Aorta (tissue), 5 donors: ENCODE measurements at regions of chr19 and their contacts with region 1.

Region 1: DNA sequence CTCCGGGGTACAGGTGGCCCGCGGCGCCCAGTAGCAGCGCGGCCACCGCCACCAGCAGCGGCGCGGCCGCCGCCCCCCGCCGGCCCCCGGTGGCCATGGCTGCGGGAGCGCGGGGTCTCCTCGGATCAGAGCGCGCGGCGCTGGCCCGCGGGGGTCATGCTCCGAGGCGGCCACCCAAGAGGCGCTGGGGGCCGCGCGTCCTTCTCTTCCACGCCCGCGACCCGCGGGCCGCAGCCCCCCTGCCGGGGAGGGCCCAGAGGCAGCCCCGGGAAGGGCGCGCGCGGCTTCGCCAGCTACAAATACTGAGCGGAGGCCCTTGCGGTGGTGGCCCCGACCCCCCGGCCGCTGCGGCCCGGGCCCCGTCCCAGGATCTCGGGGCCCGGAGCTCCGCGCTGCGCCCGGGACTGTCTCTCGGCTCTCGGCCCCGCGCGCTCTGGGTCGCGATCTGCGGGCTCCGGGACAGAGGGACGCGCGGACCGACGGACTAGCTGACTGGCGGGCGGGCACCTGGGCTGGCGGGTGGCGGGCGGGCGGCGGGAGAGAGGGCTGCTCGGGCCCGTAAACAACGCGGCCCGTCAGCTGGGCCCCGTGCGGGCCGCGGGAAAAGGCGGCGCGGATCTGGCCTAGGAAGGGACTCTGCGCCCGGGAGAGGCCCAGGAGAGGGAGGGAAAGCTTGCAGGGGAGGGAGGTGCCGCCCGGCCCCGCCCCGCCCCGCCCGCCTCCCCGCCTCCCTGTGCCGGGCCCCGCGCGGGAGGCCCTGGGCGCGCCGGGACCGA is at the start of gene INSR:
- DNase-seq: peak; percentile 94 to 95
- ATAC-seq: peak; percentile 96
- H3K4me3 ChIP-seq: peak within 1 kb of the TSS; percentile 90 to 94
- H3K27ac ChIP-seq: peak within 1 kb of the TSS; percentile 59 to 74
- H3K4me1 ChIP-seq: peaks cover 0 to 2% of the 10 kb centered on the region in 2 donors
- H3K27me3 ChIP-seq: no peaks in the 10 kb centered on the region
- total RNA-seq, gene INSR: 67.0 to 106 TPM

Region 2: GRCh38 chr19:7145494-7146485 is 148.2 kb before region 1 on chr19:
- intact Hi-C with region 1: loop called (anchors 5 kb)
- DNase-seq: peak in 1 of 2 donors; percentile 12
- ATAC-seq: no peak
- H3K4me3 ChIP-seq: no peak overlapping the region
- H3K27ac ChIP-seq: no peak overlapping the region
- H3K4me1 ChIP-seq: no peaks in the 10 kb centered on the region
- H3K27me3 ChIP-seq: no peaks in the 10 kb centered on the region

Region 3: DNA sequence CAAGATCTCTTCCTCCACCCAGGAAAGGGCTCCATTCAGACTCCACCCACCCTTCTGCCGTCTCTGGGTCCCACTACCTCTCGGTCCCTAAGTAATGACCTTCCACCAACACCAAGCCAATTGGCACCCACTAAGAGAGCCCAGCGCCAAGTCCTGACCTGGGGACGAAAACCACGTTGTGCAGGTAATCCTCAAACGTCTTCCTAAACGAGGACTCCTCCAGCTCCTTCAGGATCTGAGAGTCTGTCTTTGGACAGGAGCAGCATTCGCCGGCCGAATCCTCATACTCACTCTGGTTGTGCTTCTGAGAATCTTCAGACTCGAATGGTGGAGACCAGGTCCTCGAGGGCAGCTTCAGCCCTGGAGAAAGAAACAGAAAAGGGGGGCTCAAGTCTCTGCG is 141.4 kb before region 1 on chr19:
- intact Hi-C with region 1: loop called (anchors 5 kb)
- DNase-seq: peak in 1 of 2 donors; percentile 51
- ATAC-seq: no peak
- H3K4me3 ChIP-seq: no peak overlapping the region
- H3K27ac ChIP-seq: no peak overlapping the region
- H3K4me1 ChIP-seq: no peaks in the 10 kb centered on the region
- H3K27me3 ChIP-seq: no peaks in the 10 kb centered on the region

Region 4: GRCh38 chr19:7159105-7159933 is 134.7 kb before region 1 on chr19:
- intact Hi-C with region 1: loop called (anchors 5 kb)
- DNase-seq: peak; percentile 83 to 87
- ATAC-seq: peak; percentile 94
- H3K4me3 ChIP-seq: no peak overlapping the region
- H3K27ac ChIP-seq: peak overlapping the region; percentile 73 to 77
- H3K4me1 ChIP-seq: no peaks in the 10 kb centered on the region
- H3K27me3 ChIP-seq: no peaks in the 10 kb centered on the region

Region 5: GRCh38 chr19:7197760-7198696 is 96.0 kb before region 1 on chr19:
- intact Hi-C with region 1: loop called (anchors 1 kb)
- DNase-seq: peak; percentile 96 to 97
- ATAC-seq: peak; percentile 95
- H3K4me3 ChIP-seq: peak overlapping the region; percentile 61 to 74
- H3K27ac ChIP-seq: peak overlapping the region in 1 of 2 donors; percentile 72
- H3K4me1 ChIP-seq: no peaks in the 10 kb centered on the region
- H3K27me3 ChIP-seq: no peaks in the 10 kb centered on the region

Region 6: GRCh38 chr19:7230826-7231225 is 63.2 kb before region 1 on chr19:
- intact Hi-C with region 1: loop called in 1 of 2 experiments (anchors 10 kb)
- DNase-seq: peak; percentile 80 to 81
- ATAC-seq: peak; percentile 85
- H3K4me3 ChIP-seq: no peak overlapping the region
- H3K27ac ChIP-seq: peak overlapping the region in 1 of 2 donors; percentile 61
- H3K4me1 ChIP-seq: peaks cover 0 to 3% of the 10 kb centered on the region in 2 donors
- H3K27me3 ChIP-seq: no peaks in the 10 kb centered on the region

Region 7: GRCh38 chr19:7250951-7251893 is 42.8 kb before region 1 on chr19:
- intact Hi-C with region 1: loop called in 1 of 2 experiments (anchors 5 kb)
- DNase-seq: no peak
- ATAC-seq: no peak
- H3K4me3 ChIP-seq: no peak overlapping the region
- H3K27ac ChIP-seq: peak overlapping the region in 1 of 2 donors; percentile 92
- H3K4me1 ChIP-seq: peaks cover 3 to 6% of the 10 kb centered on the region in 2 donors
- H3K27me3 ChIP-seq: no peaks in the 10 kb centered on the region

Region 8: GRCh38 chr19:7263521-7263920 is 30.5 kb before region 1 on chr19:
- intact Hi-C with region 1: no loop called
- DNase-seq: no peak
- ATAC-seq: no peak
- H3K4me3 ChIP-seq: no peak overlapping the region
- H3K27ac ChIP-seq: no peak overlapping the region
- H3K4me1 ChIP-seq: peaks cover 0 to 2% of the 10 kb centered on the region in 2 donors
- H3K27me3 ChIP-seq: no peaks in the 10 kb centered on the region